ENCODE measurements at regions of chr4 and their contacts with region 1.

Region 1: GRCh38 chr4:186587416-186588018 is 32.1 kb upstream of the MTNR1A start:
- DNase-seq: no peak
- H3K4me3 ChIP-seq: no peak overlapping the region
- H3K27ac ChIP-seq: no peak overlapping the region
- H3K4me1 ChIP-seq: no peaks in the 10 kb centered on the region
- H3K27me3 ChIP-seq: no peaks in the 10 kb centered on the region
- CTCF ChIP-seq: peak; percentile 76 to 84

Region 2: GRCh38 chr4:186297013-186297645 is 290.4 kb before region 1 on chr4:
- CTCF ChIA-PET with region 1: no interaction called
- dilution Hi-C with region 1: loop called (anchors 10 kb)
- in situ Hi-C with region 1: loop called (anchors 10 to 25 kb)
- intact Hi-C with region 1: loop called (anchors 1 kb)
- DNase-seq: peak; percentile 29
- H3K4me3 ChIP-seq: no peak overlapping the region
- H3K27ac ChIP-seq: no peak overlapping the region
- H3K4me1 ChIP-seq: no peaks in the 10 kb centered on the region
- H3K27me3 ChIP-seq: no peaks in the 10 kb centered on the region
- CTCF ChIP-seq: peak; percentile 62

Region 3: DNA sequence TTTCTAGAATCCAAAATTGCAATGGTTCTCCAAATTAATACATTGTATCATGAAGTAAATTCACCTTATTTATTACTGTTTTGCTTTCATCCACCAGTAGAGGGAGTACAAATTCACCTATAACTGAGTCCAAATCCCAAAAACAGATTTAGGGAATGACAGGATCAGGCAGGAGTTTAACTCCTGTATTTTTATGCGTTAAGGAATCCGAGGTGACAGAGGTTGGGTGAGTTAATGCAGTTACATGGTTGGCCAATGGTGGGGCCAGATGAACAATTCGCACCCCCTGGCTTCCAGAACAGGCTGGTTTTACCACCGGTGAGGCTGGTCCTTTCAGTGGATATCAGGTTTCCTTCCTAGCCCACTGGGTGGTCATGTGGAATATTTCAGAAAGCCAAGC is 114.6 kb before region 1 on chr4:
- CTCF ChIA-PET with region 1: no interaction called
- dilution Hi-C with region 1: no loop called
- in situ Hi-C with region 1: no loop called
- intact Hi-C with region 1: loop called (anchors 1 kb)
- DNase-seq: peak; percentile 7
- H3K4me3 ChIP-seq: no peak overlapping the region
- H3K27ac ChIP-seq: no peak overlapping the region
- H3K4me1 ChIP-seq: no peaks in the 10 kb centered on the region
- H3K27me3 ChIP-seq: no peaks in the 10 kb centered on the region
- CTCF ChIP-seq: peak; percentile 55 to 65

Region 4: GRCh38 chr4:186500721-186501304 is 86.7 kb before region 1 on chr4:
- CTCF ChIA-PET with region 1: no interaction called
- dilution Hi-C with region 1: loop called (anchors 5 kb)
- in situ Hi-C with region 1: no loop called
- intact Hi-C with region 1: no loop called
- DNase-seq: no peak
- H3K4me3 ChIP-seq: no peak overlapping the region
- H3K27ac ChIP-seq: no peak overlapping the region
- H3K4me1 ChIP-seq: no peaks in the 10 kb centered on the region
- H3K27me3 ChIP-seq: no peaks in the 10 kb centered on the region
- CTCF ChIP-seq: no peak

Region 5: DNA sequence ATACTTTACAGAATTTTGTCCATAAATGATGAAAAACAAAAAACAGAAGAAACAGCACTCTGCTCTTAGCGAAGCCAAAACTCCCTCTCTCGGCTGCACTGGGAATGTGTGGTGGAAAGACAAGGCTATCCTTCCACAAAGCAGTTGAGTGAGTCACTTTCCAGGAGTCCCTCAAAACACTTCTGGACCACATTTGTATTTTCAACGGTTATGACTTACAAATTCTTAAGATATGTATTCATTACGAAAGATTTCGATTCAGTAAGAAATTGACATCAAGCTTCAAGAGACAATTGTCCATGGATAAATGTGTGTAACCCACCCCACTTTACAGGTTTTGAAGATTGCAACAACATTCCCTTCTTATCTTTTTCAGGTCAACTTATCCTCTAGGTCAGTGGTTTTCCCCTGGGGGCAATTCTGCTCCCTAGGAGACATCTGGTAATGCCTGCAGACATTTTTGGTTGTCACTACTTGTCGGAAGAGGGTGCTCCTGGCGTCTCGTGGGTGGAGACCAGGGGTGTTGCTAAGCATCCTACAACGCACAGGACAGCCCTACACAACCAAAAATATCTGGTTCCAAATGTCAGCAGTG is 34.5 kb after region 1 on chr4:
- CTCF ChIA-PET with region 1: no interaction called
- dilution Hi-C with region 1: loop called (anchors 5 kb)
- in situ Hi-C with region 1: no loop called
- intact Hi-C with region 1: no loop called
- DNase-seq: peak; percentile 79
- H3K4me3 ChIP-seq: no peak overlapping the region
- H3K27ac ChIP-seq: no peak overlapping the region
- H3K4me1 ChIP-seq: peaks cover 16% of the 10 kb centered on the region
- H3K27me3 ChIP-seq: no peaks in the 10 kb centered on the region
- CTCF ChIP-seq: peak in 1 of 2 donors; percentile 17

Measured in mammary epithelial cell (primary cell).